ENCODE measurements at regions of chr2 and their contacts with region 1.

Region 1: GRCh38 chr2:229825476-229825875 is 96.3 kb downstream of the TRIP12 start:
- DNase-seq: no peak
- H3K4me3 Mint-ChIP-seq: no peak overlapping the region
- H3K27ac Mint-ChIP-seq: no peak overlapping the region
- H3K4me1 Mint-ChIP-seq: peaks cover 37% of the 10 kb centered on the region
- H3K27me3 Mint-ChIP-seq: no peaks in the 10 kb centered on the region

Region 2: GRCh38 chr2:228927028-228928010 is 898.2 kb before region 1 on chr2:
- intact Hi-C with region 1: no loop called
- DNase-seq: no peak
- H3K4me3 Mint-ChIP-seq: no peak overlapping the region
- H3K27ac Mint-ChIP-seq: no peak overlapping the region
- H3K4me1 Mint-ChIP-seq: no peaks in the 10 kb centered on the region
- H3K27me3 Mint-ChIP-seq: no peaks in the 10 kb centered on the region

Region 3: GRCh38 chr2:229714736-229715541 is 110.5 kb before region 1 on chr2:
- intact Hi-C with region 1: loop called (anchors 5 kb)
- DNase-seq: peak; percentile 8
- H3K4me3 Mint-ChIP-seq: no peak overlapping the region
- H3K27ac Mint-ChIP-seq: no peak overlapping the region
- H3K4me1 Mint-ChIP-seq: no peaks in the 10 kb centered on the region
- H3K27me3 Mint-ChIP-seq: peaks cover 64% of the 10 kb centered on the region

Region 4: GRCh38 chr2:229852565-229852964 is 27.1 kb after region 1 on chr2:
- intact Hi-C with region 1: loop called (anchors 2 kb)
- DNase-seq: peak; percentile 20
- H3K4me3 Mint-ChIP-seq: no peak overlapping the region
- H3K27ac Mint-ChIP-seq: no peak overlapping the region
- H3K4me1 Mint-ChIP-seq: peaks cover 72% of the 10 kb centered on the region
- H3K27me3 Mint-ChIP-seq: no peaks in the 10 kb centered on the region

Region 5: DNA sequence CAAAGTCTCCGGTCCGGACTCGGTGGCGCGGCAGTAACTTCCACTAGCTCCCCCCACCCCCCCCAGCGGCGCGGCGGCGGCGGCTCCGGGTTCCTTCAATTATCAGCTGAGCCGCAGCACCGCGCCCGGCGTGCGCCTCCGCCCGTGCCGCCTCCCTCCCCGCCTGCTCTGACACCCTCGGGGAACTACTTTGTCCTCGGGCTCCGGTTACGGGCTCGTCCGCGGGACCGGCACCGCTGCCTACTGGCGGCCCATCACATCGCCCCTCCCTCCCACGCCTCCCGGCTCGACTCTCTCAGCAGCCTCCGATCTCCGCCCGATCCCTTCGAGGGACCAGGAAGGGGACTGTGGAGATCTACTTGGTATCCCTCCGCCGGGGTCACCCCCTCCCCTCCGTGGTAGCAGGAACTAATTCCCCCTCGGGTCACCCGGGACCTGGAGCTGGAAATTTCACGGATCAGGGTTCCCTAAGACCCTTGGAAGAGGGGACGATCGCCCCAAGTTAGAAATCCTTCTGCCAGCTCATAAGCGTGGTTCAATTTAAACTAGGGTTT is 96.5 kb after region 1 on chr2 and contains the start of gene TRIP12:
- intact Hi-C with region 1: loop called (anchors 1 kb)
- DNase-seq: peak; percentile 83
- H3K4me3 Mint-ChIP-seq: peak within 1 kb of the TSS; percentile 97
- H3K27ac Mint-ChIP-seq: peak within 1 kb of the TSS; percentile 96
- H3K4me1 Mint-ChIP-seq: peaks cover 40% of the 10 kb centered on the region
- H3K27me3 Mint-ChIP-seq: no peaks in the 10 kb centered on the region
- total RNA-seq, gene TRIP12: 244 and 253 TPM in 2 replicates

Region 6: GRCh38 chr2:230254152-230254881 is 428.8 kb after region 1 on chr2:
- intact Hi-C with region 1: no loop called
- DNase-seq: no peak
- H3K4me3 Mint-ChIP-seq: no peak overlapping the region
- H3K27ac Mint-ChIP-seq: no peak overlapping the region
- H3K4me1 Mint-ChIP-seq: peaks cover 12% of the 10 kb centered on the region
- H3K27me3 Mint-ChIP-seq: no peaks in the 10 kb centered on the region

Region 7: DNA sequence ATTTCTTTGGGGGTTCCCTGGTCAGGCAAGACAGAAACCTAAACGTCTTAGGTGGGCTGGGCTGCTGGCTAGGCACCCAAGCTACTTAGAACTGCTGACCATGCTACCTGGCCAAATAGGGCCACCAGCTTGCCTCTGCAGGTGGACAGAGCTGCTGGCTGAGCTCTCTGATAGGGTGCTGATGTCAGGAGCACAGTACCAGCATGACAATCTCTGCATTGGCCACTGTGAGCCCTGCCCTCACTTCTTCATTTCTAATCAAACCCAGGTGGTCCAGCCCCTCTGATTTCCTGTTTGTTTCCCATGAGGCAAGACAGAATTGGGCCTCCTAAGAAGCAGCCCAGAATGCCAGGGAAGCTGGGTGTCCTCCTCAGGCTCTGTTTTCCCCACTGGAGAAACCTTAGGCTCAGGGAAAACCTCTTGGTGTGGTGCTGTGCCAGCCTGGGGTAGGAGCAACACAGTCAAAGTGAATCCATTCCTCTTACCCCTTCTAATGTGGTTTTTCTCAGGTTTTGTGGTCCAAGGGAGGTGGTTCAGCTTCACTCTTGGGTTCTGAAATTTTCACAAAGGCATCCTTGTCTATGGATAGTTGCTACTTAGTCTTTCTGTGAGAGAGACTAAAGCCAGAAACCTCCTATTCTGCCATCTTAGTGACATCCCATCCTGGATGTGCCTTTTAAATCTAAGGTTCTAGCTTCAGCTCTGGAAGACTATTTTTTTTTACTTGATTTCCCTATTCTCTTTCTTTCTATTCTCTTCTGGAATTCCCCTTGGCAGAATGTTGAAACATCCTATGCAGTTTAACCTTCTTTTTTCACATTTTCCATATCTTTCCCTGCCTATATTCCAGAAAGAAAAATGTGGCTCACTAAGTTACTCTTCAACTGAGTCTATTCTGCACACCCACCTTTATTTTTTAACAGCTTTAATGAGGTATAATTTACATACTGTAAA is 605.8 kb after region 1 on chr2:
- intact Hi-C with region 1: no loop called
- DNase-seq: no peak
- H3K4me3 Mint-ChIP-seq: peak overlapping the region; percentile 8
- H3K27ac Mint-ChIP-seq: peak overlapping the region; percentile 32
- H3K4me1 Mint-ChIP-seq: peaks cover 64% of the 10 kb centered on the region
- H3K27me3 Mint-ChIP-seq: no peaks in the 10 kb centered on the region

Region 8: DNA sequence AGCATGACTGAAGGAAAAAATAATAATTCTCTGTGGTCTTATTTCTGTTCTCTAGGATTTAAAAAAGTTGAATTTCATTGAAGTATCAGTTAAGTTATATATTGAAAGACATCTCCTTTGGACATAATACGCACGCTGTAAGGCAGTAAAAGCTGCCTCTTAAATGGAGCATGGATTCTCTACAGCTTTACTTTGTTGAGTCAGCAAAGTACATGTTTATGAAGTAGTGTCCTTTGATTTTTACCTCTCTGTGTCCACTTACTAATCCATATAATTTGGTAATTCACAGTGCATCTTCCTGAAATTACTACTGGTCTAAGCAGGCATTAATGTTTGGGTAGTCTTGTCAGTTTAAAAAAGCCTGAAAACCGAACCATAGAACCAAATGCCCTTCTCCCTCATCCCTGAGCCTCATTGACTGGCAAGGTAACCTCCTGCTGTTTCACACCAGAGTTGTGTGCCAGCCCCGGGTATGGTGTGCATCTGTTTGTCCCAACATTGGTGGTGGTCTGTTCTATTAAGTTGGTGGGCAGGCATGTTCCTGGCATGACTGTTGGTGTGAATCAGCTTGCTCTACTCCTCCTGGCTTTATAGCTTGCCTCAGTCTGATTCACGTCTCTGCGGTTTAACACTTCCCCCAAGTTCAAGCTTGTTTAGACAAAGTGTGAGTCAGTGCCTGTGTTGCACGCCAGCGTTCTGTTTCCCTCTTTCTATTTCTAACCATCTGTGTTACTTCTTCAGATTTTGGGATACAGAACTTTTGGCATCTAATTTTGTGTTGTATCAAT is 968.3 kb after region 1 on chr2:
- intact Hi-C with region 1: loop called (anchors 5 kb)
- DNase-seq: peak; percentile 73
- H3K4me3 Mint-ChIP-seq: peak overlapping the region; percentile 78
- H3K27ac Mint-ChIP-seq: peak overlapping the region; percentile 97
- H3K4me1 Mint-ChIP-seq: peaks cover 61% of the 10 kb centered on the region
- H3K27me3 Mint-ChIP-seq: peaks cover 2% of the 10 kb centered on the region

Measured in activated T-helper 1 cell treated with anti-CD3 and anti-CD28 coated beads, Interleukin-12 subunit alpha, Interleukin-12 subunit beta, Interleukin-2, Interleukin-4 antibody, amounts not matched to agents 30 ng/mL and 10 ng/mL and 1 ng/mL, durations not matched to agents 14 hours and 24 hours and 36 hours (primary cell).